ENCODE measurements at regions of chr3 and their contacts with region 1.

Region 1: GRCh38 chr3:112464264-112464663 is 35.0 kb downstream of the BTLA start:
- DNase-seq: no peak
- H3K4me3 Mint-ChIP-seq: peak overlapping the region; percentile 58
- H3K27ac Mint-ChIP-seq: peak overlapping the region; percentile 23
- H3K4me1 Mint-ChIP-seq: peaks cover 73% of the 10 kb centered on the region
- H3K27me3 Mint-ChIP-seq: no peaks in the 10 kb centered on the region

Region 2: GRCh38 chr3:112382543-112383160 is 81.6 kb before region 1 on chr3:
- intact Hi-C with region 1: loop called (anchors 2 kb)
- DNase-seq: no peak
- H3K4me3 Mint-ChIP-seq: peak overlapping the region; percentile 1
- H3K27ac Mint-ChIP-seq: peak overlapping the region; percentile 74
- H3K4me1 Mint-ChIP-seq: peaks cover 28% of the 10 kb centered on the region
- H3K27me3 Mint-ChIP-seq: no peaks in the 10 kb centered on the region

Region 3: GRCh38 chr3:112481302-112481721 is 17.0 kb after region 1 on chr3:
- intact Hi-C with region 1: loop called (anchors 2 kb)
- DNase-seq: no peak
- H3K4me3 Mint-ChIP-seq: no peak overlapping the region
- H3K27ac Mint-ChIP-seq: no peak overlapping the region
- H3K4me1 Mint-ChIP-seq: peaks cover 37% of the 10 kb centered on the region
- H3K27me3 Mint-ChIP-seq: no peaks in the 10 kb centered on the region

Region 4: DNA sequence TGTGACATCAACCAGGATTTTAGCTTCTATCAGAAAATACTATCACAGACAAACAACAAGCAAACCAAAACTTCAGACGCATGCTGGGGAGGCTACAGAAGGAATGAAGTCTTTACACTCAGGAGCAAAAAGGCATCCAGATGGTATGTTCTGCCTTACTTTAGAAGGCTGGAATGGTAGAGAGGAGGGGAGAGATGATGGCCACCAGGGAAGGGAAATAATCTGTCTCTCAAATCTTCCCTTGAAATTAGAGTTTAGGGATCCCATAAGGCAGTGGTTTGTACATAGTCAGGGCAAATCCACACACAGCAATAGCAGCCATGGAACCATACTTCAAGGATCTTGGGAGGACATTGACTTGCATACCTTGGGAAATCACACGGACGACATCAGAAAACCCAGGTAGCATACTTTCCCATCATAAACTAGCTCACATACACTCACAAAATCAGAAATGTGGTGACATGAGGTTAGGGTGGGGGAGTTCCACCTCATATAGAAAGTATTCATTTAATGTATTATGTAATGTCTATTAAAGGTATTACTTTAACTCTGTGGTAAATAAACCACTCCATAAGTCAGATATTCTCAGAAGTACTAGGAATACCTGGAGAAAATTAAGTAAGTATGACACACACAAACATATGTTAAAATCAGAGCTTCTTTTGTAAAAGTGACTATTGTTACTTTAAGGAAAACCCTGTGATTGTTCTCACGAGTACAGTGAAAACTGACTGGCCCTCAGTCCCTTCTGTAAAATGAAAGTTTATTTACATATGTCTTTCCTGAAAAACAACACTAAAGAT is 25.6 kb after region 1 on chr3:
- intact Hi-C with region 1: loop called (anchors 2 kb)
- DNase-seq: peak; percentile 57
- H3K4me3 Mint-ChIP-seq: peak overlapping the region; percentile 76
- H3K27ac Mint-ChIP-seq: peak overlapping the region; percentile 87
- H3K4me1 Mint-ChIP-seq: peaks cover 54% of the 10 kb centered on the region
- H3K27me3 Mint-ChIP-seq: no peaks in the 10 kb centered on the region

Region 5: DNA sequence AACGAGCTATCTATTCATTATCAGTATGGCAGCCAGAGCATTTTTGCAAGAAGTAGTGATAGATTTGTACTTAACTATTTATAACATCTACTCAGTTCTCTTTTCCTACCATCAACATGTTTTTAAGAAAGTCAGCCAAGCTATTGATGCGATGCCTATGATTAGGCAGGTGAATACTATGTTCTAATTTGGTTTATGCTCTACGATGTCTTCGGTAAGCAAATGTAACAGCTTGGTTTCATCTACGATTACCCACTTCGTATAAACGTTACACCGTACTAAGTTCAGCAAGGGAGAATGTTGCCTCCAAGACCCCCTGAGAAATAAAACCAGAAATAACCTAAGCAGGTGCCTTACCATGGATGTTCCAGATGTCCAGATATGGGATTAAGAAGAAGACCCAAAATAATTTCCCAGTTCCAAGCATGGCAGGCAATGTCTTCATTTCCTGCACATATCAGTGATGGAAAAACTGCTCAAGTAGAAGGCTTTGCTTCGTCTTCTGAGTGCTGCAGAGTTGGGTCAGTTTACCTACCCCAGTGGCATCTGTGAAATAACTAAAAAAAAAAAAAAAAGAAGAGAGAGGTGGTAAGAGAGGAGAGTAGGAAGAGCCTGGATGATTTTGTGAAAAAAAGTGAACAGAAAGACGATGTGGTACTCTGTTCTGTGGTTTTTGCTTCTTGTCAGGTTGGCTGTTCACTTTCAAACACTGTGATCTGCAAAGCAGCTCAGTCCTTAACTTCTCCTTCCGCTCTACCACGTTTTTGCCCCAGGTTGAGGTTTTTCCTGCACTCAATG is 34.8 kb after region 1 on chr3 and contains the start of gene BTLA:
- intact Hi-C with region 1: loop called (anchors 1 kb)
- DNase-seq: peak; percentile 81
- H3K4me3 Mint-ChIP-seq: peak within 1 kb of the TSS; percentile 97
- H3K27ac Mint-ChIP-seq: peak within 1 kb of the TSS; percentile 94
- H3K4me1 Mint-ChIP-seq: peaks cover 50% of the 10 kb centered on the region
- H3K27me3 Mint-ChIP-seq: no peaks in the 10 kb centered on the region
- total RNA-seq, gene BTLA: 33.7 and 36.0 TPM in 2 replicates

Region 6: GRCh38 chr3:112519424-112520001 is 55.2 kb after region 1 on chr3:
- intact Hi-C with region 1: loop called (anchors 1 kb)
- DNase-seq: peak; percentile 83
- H3K4me3 Mint-ChIP-seq: no peak overlapping the region
- H3K27ac Mint-ChIP-seq: no peak overlapping the region
- H3K4me1 Mint-ChIP-seq: peaks cover 20% of the 10 kb centered on the region
- H3K27me3 Mint-ChIP-seq: no peaks in the 10 kb centered on the region

Region 7: GRCh38 chr3:112561731-112562688 is 97.7 kb after region 1 on chr3 and contains the starts of genes ATG3 and SLC35A5:
- intact Hi-C with region 1: loop called (anchors 5 kb)
- DNase-seq: peak; percentile 100
- H3K4me3 Mint-ChIP-seq: peak within 1 kb of the TSS; percentile 98
- H3K27ac Mint-ChIP-seq: peak within 1 kb of the TSS; percentile 99
- H3K4me1 Mint-ChIP-seq: peaks cover 24% of the 10 kb centered on the region
- H3K27me3 Mint-ChIP-seq: no peaks in the 10 kb centered on the region
- total RNA-seq, gene ATG3: 66.9 and 69.1 TPM in 2 replicates
- total RNA-seq, gene SLC35A5: 15.5 and 16.3 TPM in 2 replicates

Region 8: GRCh38 chr3:112582244-112582874 is 118.1 kb after region 1 on chr3:
- intact Hi-C with region 1: no loop called
- DNase-seq: peak; percentile 79
- H3K4me3 Mint-ChIP-seq: no peak overlapping the region
- H3K27ac Mint-ChIP-seq: no peak overlapping the region
- H3K4me1 Mint-ChIP-seq: peaks cover 3% of the 10 kb centered on the region
- H3K27me3 Mint-ChIP-seq: no peaks in the 10 kb centered on the region